Activated CD4-positive, alpha-beta T cell treated with anti-CD3 and anti-CD28 coated beads, Interleukin-2, amount 10 ng/mL, durations not matched to agents 24 days and 14 days (primary cell): ENCODE measurements at regions of chr11 and their contacts with region 1.

Region 1: DNA sequence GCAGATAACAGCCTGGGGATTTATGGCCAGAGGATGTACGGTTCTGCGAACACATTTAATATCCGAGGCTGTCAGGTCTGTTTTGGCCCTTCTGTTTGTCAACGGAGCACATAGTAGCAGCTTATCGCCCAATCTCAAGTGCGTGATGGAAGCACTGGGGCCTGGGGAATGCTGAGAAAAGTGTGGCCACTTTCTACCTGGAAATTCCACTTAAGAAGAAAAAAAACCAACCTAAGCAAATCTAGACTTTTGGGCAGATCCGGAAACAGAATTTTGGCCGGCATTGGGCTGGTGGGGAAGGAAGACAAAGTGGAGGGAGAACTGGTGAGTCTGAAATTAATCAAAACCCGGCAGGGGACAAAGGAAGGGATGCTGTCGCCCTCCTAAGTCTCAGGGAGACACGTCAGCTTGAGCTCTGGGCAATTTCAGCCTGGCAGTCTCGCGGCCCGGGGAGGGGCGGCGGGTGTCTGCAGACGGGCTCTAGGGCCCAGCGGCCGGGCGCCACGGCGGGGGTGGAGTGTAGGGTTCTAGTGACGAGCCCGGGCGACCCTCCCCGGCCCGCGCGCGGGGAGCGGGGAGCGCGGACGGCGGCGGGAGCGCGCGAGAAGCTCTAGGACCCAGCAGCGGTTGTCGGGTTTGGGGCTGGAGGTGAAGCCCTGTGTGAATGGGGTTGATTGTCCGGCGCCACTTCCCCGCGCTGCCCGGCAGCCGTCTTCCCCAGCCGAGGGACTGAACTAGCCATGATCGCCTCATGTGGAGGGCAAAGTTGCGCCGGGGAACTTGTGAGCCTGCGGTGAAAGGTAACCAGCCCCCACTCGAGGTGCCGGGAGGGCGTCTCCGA is at the start of gene AMOTL1:
- DNase-seq: peak; percentile 83
- H3K4me3 Mint-ChIP-seq: peak within 1 kb of the TSS; percentile 84
- H3K27ac Mint-ChIP-seq: peak within 1 kb of the TSS; percentile 59
- H3K4me1 Mint-ChIP-seq: peaks cover 9% of the 10 kb centered on the region
- H3K27me3 Mint-ChIP-seq: peaks cover 47% of the 10 kb centered on the region
- total RNA-seq, gene AMOTL1: 5.4 and 5.9 TPM in 2 replicates

Region 2: GRCh38 chr11:94623120-94623735 is 144.8 kb before region 1 on chr11:
- intact Hi-C with region 1: loop called (anchors 10 kb)
- DNase-seq: peak; percentile 86
- H3K4me3 Mint-ChIP-seq: no peak overlapping the region
- H3K27ac Mint-ChIP-seq: no peak overlapping the region
- H3K4me1 Mint-ChIP-seq: no peaks in the 10 kb centered on the region
- H3K27me3 Mint-ChIP-seq: peaks cover 3% of the 10 kb centered on the region

Region 3: GRCh38 chr11:94741022-94741679 is 26.8 kb before region 1 on chr11:
- intact Hi-C with region 1: loop called (anchors 2 kb)
- DNase-seq: peak; percentile 57
- H3K4me3 Mint-ChIP-seq: peak overlapping the region; percentile 79
- H3K27ac Mint-ChIP-seq: no peak overlapping the region
- H3K4me1 Mint-ChIP-seq: peaks cover 12% of the 10 kb centered on the region
- H3K27me3 Mint-ChIP-seq: peaks cover 37% of the 10 kb centered on the region

Region 4: GRCh38 chr11:94885133-94885532 is 117.2 kb after region 1 on chr11:
- intact Hi-C with region 1: no loop called
- DNase-seq: peak; percentile 43
- H3K4me3 Mint-ChIP-seq: no peak overlapping the region
- H3K27ac Mint-ChIP-seq: no peak overlapping the region
- H3K4me1 Mint-ChIP-seq: peaks cover 4% of the 10 kb centered on the region
- H3K27me3 Mint-ChIP-seq: peaks cover 3% of the 10 kb centered on the region